ENCODE measurements at regions of chr6 and their contacts with region 1.

Region 1: GRCh38 chr6:168895102-168895812 is 358.4 kb downstream of the THBS2 start:
- DNase-seq: no peak
- H3K4me3 ChIP-seq: no peak overlapping the region; the same call in 1 of the 2 replicates
- CTCF ChIP-seq: peak; percentile 89

Region 2: GRCh38 chr6:168949981-168950857 is 55.0 kb after region 1 on chr6:
- CTCF ChIA-PET with region 1: interaction called, 25 read pairs
- POLR2A ChIA-PET with region 1: no interaction called
- DNase-seq: no peak
- H3K4me3 ChIP-seq: no peak overlapping the region
- CTCF ChIP-seq: no peak

Region 3: DNA sequence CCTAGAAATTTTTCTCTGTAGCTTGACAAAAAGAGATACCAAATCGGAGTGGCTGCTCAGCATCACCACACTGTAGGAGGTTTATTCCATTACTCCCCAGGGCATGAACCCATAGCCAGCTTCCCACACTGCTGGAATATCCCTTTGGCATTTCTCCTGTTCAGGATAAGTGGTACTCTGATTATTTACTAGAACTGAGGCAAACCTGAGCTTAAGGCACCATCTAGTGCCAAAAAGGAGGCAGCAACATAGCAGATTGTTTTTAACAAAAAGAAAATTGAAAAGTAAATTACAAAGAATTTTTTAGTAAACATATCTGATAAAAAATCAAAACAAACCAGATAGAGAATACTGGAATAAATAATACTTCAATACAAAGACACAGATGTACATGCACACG is 624.8 kb after region 1 on chr6:
- CTCF ChIA-PET with region 1: interaction called, 36 read pairs
- POLR2A ChIA-PET with region 1: no interaction called
- DNase-seq: no peak
- H3K4me3 ChIP-seq: no peak overlapping the region
- CTCF ChIP-seq: peak; percentile 23

Region 4: DNA sequence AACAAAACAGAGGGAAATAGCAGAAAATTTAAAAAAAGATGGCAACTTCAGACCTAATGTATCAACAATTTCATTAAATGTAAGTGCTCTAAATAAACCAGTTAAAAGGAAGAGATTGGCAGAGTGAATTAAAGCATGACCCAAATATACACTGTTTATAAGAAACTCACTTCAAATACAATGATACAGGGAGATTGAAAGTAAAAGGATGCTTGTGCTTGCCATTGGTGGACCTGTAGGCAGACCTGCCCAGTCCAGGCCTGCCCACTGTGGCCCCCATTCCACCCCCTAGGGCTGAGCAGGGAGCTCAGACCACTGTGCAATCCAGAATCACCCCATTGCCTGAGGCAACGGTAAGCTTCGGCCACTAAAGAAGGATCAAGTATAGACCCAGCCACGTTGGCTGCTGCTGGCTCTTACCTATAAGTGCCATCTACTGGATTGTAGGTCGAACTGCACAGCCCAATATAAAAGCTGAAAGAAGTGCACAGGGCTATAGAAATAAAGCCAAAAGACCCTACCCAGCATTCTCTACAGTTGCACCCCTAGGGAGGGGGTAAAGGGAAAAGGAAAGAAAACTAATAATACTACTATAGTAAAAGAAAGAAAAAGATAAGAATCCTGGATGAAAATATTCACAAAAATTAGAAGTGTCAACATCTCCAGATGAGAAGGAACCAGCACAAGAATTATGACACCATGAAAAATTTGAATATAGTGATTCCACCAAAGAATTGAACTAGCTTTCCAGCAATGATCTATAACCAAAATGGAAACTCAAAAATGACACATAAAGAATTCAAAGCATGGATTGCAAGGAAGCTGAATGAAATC is 1621.7 kb after region 1 on chr6:
- CTCF ChIA-PET with region 1: interaction called, 12 read pairs
- POLR2A ChIA-PET with region 1: no interaction called
- DNase-seq: peak; percentile 31
- H3K4me3 ChIP-seq: no peak overlapping the region
- CTCF ChIP-seq: peak; percentile 73

Measured in AG04449 (cell line).